Activated CD8-positive, alpha-beta memory T cell treated with anti-CD3 and anti-CD28 coated beads, Interleukin-2, amount 10 ng/mL, durations not matched to agents 7 days and 5 days (primary cell): ENCODE measurements at regions of chr12 and their contacts with region 1.

Region 1: DNA sequence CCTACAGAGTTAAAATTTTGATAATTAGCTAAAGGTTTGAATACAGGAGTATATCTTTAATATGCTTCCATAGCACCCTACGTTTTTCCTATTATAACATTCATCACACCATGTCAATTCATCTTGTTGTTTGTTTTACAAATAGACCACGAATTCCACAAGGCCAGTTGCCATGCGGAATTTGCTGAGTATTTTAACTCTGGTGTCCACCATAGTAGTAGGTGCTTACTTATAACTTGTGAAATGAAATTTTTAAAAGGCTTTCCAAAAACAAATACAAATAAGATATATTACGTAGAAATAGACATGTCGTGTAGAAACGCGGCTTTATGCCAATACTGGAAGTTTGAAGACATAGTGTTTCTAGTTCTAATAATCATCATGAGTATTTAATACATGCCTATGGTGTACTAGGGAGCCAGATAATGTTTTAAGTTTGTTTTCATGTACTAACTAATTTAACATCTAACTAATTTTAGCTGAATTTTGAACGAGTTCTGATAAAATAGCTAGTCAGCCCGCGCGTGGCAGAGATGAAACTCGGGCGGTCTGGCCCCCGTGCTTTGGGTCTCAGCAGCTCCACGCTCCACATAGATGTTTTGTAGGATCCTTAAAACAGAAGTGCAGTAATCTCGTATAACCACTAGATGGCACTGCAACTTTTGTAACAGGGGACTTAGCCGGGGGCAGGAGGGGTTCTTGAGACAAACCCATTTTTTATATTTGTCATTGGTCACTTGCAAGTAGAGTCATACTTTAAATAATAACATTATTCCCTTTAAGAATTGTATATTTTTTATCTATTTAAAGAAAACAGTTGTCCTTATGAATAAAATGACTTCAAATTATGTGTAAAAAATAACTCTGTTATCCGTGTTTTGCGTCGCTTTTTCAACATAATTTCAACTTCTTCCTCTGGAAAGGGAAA is 10.2 kb downstream of the CD69 start:
- DNase-seq: peak; percentile 71
- ATAC-seq: peak; percentile 65
- H3K4me3 Mint-ChIP-seq: peak overlapping the region; percentile 37
- H3K27ac Mint-ChIP-seq: peak overlapping the region; percentile 61
- H3K4me1 Mint-ChIP-seq: peaks cover 52% of the 10 kb centered on the region
- H3K27me3 Mint-ChIP-seq: no peaks in the 10 kb centered on the region

Region 2: GRCh38 chr12:9660046-9660445 is 90.5 kb before region 1 on chr12:
- CTCF ChIA-PET with region 1: no interaction called
- DNase-seq: no peak
- ATAC-seq: no peak
- H3K4me3 Mint-ChIP-seq: no peak overlapping the region
- H3K27ac Mint-ChIP-seq: no peak overlapping the region
- H3K4me1 Mint-ChIP-seq: peaks cover 82% of the 10 kb centered on the region
- H3K27me3 Mint-ChIP-seq: no peaks in the 10 kb centered on the region

Region 3: GRCh38 chr12:9760699-9761418 is 10.3 kb after region 1 on chr12 and contains the start of gene CD69:
- CTCF ChIA-PET with region 1: interaction called, 108 read pairs
- DNase-seq: peak; percentile 91
- ATAC-seq: peak; percentile 54
- H3K4me3 Mint-ChIP-seq: peak within 1 kb of the TSS; percentile 99
- H3K27ac Mint-ChIP-seq: peak within 1 kb of the TSS; percentile 99
- H3K4me1 Mint-ChIP-seq: peaks cover 50% of the 10 kb centered on the region
- H3K27me3 Mint-ChIP-seq: no peaks in the 10 kb centered on the region
- total RNA-seq, gene CD69: 76.0 to 104 TPM

Region 4: DNA sequence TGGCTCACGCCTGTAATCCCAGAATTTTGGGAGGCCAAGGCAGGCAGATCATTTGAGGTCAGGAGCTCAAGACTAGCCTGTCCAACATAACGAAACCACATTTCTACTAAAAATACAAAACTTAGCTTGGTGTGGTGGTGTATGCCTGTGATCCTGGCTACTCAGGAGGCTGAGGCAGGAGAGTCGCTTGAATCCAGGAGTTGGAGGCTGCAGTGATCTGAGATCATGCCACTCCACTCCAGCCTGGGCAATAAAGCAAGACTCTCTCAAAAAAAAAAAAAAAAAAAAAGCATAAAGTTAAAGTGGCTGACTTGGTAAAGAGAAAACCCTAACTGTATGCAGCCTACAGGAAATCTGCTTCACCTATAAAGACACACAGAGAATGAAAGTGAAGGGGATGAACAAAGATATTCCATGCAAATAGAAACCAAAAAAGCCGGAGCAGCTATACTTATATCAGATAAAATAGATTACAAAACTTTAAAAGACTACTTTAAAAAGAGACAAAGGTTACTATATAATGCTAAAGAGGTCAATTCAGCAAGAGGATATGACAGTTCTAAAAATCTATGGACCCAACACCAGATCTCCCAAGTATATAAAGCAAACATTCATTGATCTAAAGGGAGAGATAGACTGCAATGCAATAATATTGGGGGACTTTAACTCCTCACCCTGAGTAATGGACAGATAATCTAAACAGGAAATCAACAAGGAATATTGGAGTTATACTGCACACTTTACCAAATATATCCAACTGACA is 114.6 kb after region 1 on chr12:
- CTCF ChIA-PET with region 1: interaction called, 15 read pairs
- DNase-seq: no peak
- ATAC-seq: peak; percentile 55
- H3K4me3 Mint-ChIP-seq: peak overlapping the region; percentile 85
- H3K27ac Mint-ChIP-seq: peak overlapping the region; percentile 90
- H3K4me1 Mint-ChIP-seq: peaks cover 32% of the 10 kb centered on the region
- H3K27me3 Mint-ChIP-seq: no peaks in the 10 kb centered on the region

Region 5: GRCh38 chr12:9883175-9883574 is 132.6 kb after region 1 on chr12:
- CTCF ChIA-PET with region 1: no interaction called
- DNase-seq: no peak
- ATAC-seq: no peak
- H3K4me3 Mint-ChIP-seq: no peak overlapping the region
- H3K27ac Mint-ChIP-seq: no peak overlapping the region
- H3K4me1 Mint-ChIP-seq: peaks cover 22% of the 10 kb centered on the region
- H3K27me3 Mint-ChIP-seq: no peaks in the 10 kb centered on the region

Region 6: DNA sequence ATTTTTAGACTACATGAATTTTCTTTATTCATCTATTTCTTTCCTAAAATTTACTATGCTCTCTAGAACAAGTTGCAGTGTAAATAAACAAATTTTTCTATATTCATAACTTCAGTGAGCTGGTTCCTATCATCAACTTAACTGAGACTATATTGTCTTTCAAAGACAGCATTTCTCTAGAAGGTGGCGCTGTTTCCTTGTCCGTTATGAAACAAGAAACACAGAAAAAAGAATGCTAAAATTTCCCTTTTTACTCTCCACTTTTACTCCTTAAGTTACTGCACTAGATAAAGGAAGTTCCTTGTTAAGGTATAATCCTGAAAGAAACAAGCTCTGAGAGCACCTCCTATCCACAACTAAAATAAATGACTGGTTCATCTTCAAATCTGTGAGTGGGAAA is 189.8 kb after region 1 on chr12:
- CTCF ChIA-PET with region 1: interaction called, 10 read pairs
- DNase-seq: no peak
- ATAC-seq: no peak
- H3K4me3 Mint-ChIP-seq: no peak overlapping the region
- H3K27ac Mint-ChIP-seq: no peak overlapping the region
- H3K4me1 Mint-ChIP-seq: peaks cover 15% of the 10 kb centered on the region
- H3K27me3 Mint-ChIP-seq: peaks cover 34% of the 10 kb centered on the region

Region 7: DNA sequence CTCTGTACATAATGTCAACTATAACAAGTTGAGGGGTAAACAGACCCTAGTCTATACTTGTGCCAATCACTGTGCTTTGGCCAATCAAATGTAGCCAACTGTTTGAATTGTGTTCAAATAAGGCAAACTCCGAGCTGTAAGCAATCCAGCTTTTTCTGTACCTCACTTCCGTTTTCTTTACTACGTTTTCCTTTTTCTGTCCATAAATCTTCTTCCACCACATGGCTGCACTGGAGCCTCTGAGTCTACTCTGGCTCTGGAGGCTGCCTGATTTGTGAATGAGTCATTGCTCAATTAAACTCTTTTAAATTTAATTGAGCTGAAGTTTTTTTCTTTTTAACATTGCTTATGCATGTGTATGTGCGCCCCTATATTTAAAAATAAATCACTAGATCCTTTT is 318.6 kb after region 1 on chr12:
- CTCF ChIA-PET with region 1: no interaction called
- DNase-seq: no peak
- ATAC-seq: no peak
- H3K4me3 Mint-ChIP-seq: no peak overlapping the region
- H3K27ac Mint-ChIP-seq: no peak overlapping the region
- H3K4me1 Mint-ChIP-seq: peaks cover 25% of the 10 kb centered on the region
- H3K27me3 Mint-ChIP-seq: peaks cover 59% of the 10 kb centered on the region

Region 8: DNA sequence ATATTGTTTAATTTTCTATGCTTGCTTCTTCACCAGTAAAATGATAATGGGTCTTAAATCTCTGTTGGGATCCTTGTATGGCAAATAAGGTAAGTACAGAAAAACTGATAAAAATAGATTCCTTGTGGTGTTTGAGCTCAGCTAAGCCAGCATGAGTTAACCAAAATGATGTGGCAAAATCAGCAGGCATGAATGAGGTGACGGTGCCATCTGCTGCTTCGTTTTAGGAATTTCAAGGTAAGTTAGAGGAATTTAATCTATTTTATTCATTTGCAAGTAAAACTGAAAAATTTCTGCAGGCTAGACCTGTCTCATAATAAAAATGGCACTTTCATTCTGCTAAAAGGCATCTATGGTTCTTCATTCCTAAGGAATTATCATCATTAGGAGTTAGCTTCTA is 389.5 kb after region 1 on chr12:
- CTCF ChIA-PET with region 1: interaction called, 12 read pairs
- DNase-seq: peak; percentile 59
- ATAC-seq: no peak
- H3K4me3 Mint-ChIP-seq: no peak overlapping the region
- H3K27ac Mint-ChIP-seq: no peak overlapping the region
- H3K4me1 Mint-ChIP-seq: peaks cover 2% of the 10 kb centered on the region
- H3K27me3 Mint-ChIP-seq: peaks cover 22% of the 10 kb centered on the region